ENCODE measurements at regions of chr15 and their contacts with region 1.

Region 1: GRCh38 chr15:31365655-31366127 is 39.1 kb downstream of the KLF13 start:
- DNase-seq: peak; percentile 88 to 98
- ATAC-seq: peak; percentile 86 to 94 (median 90)
- H3K4me3 ChIP-seq: peak overlapping the region; percentile 59
- H3K27ac ChIP-seq: peak overlapping the region; percentile 89
- H3K4me1 ChIP-seq: peaks cover 80% of the 10 kb centered on the region
- H3K27me3 ChIP-seq: no peaks in the 10 kb centered on the region
- CTCF ChIP-seq: peak; percentile 34

Region 2: GRCh38 chr15:31396881-31397560 is 31.3 kb after region 1 on chr15:
- intact Hi-C with region 1: loop called in 1 of 2 experiments (anchors 5 kb)
- DNase-seq: peak; percentile 86 to 97
- ATAC-seq: peak; percentile 82 to 89 (median 88)
- H3K4me3 ChIP-seq: peak overlapping the region; percentile 50
- H3K27ac ChIP-seq: peak overlapping the region; percentile 79
- H3K4me1 ChIP-seq: peaks cover 15% of the 10 kb centered on the region
- H3K27me3 ChIP-seq: no peaks in the 10 kb centered on the region
- CTCF ChIP-seq: no peak

Region 3: GRCh38 chr15:31499953-31500765 is 134.5 kb after region 1 on chr15:
- intact Hi-C with region 1: no loop called
- DNase-seq: no peak
- ATAC-seq: no peak
- H3K4me3 ChIP-seq: no peak overlapping the region
- H3K27ac ChIP-seq: no peak overlapping the region
- H3K4me1 ChIP-seq: no peaks in the 10 kb centered on the region
- H3K27me3 ChIP-seq: no peaks in the 10 kb centered on the region
- CTCF ChIP-seq: no peak

Measured in psoas muscle (tissue), 8 donors.